ENCODE measurements at regions of chr6 and their contacts with region 1.

Region 1: DNA sequence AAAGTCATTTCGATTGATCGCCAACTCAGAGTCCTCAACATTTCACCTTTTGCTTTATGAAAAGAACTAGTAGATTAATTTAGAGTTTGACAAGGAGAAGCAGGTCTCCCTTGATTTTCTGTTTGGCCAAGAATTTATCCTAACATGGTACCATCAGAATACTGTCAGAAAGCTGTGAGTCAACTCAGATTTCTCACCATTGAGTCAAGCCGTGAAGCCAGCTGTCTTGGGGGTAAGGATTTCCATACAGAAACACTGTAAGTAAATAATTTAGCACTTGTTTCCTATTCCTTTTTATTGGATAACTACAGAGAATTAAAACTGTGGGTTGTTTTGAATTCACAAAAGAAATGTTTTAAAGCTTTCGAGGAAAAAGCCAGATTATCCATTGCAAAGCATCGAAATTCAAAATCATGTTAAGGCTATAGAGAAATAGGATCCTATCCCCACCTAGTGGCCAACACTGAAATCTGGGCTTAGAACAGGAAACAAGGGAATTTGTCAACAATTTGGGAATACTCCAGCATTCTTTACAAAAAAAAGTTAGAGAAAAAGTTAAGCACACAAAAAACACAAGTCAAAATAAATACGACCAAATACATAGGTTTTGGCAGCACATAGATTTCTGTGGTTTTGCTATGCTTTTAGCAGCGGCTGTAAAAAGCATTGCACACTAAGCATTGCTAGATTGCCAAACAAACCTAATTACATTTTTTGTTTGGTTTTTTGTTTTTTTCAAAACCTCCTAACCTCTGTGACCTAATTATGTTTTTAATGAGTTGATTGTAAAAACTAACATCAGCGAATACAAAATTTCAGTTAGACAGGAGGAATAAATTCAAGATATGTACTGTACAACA is 44.2 kb downstream of the COL11A2 start:
- DNase-seq: no peak
- ATAC-seq: no peak
- H3K4me3 ChIP-seq: no peak overlapping the region
- H3K27ac ChIP-seq: no peak overlapping the region
- H3K4me1 ChIP-seq: peaks cover 3% of the 10 kb centered on the region; the same call in 1 of the 2 replicates
- H3K27me3 ChIP-seq: peaks cover 0 to 2% of the 10 kb centered on the region in 2 experiments; a peak in 2 of 4 replicates
- CTCF ChIP-seq: peak; percentile 69 to 82 (median 81)
- EP300 ChIP-seq: no peak
- POLR2A ChIP-seq: no peak
- RAD21 ChIP-seq: peak; percentile 93

Region 2: DNA sequence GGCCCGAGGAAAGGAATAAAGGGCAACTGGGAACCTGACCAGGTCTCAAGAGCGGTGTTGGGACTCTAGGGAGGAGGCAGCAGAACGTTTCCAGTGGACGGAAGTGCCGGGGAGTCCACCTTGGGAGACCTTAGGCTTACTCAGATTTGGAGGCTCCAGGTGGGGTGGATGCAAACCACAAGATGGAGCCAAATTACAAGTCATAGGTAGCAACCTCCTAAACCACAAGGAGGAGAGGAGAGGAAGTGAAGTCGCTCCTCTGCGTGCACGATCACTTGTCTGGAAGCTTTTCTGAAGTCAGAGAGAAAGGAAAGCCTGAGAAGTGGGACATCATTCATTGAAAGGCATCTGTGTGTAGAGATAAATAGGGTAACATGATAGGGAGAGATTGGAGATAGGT is 148.0 kb before region 1 on chr6:
- CTCF ChIA-PET with region 1: interaction called, 21 read pairs
- POLR2A ChIA-PET with region 1: no interaction called
- RAD21 ChIA-PET with region 1: interaction called, 3 read pairs
- SMC1A ChIA-PET with region 1: interaction called, 13 read pairs
- in situ Hi-C with region 1: no loop called
- intact Hi-C with region 1: no loop called
- DNase-seq: no peak
- ATAC-seq: peak; percentile 89
- H3K4me3 ChIP-seq: no peak overlapping the region
- H3K27ac ChIP-seq: no peak overlapping the region
- H3K4me1 ChIP-seq: peaks cover 7% of the 10 kb centered on the region; the same call in 1 of the 2 replicates
- H3K27me3 ChIP-seq: no peaks in the 10 kb centered on the region
- CTCF ChIP-seq: peak; percentile 51 to 60 (median 53)
- EP300 ChIP-seq: no peak
- POLR2A ChIP-seq: no peak
- RAD21 ChIP-seq: peak; percentile 73

Region 3: GRCh38 chr6:33118525-33119123 is 29.4 kb before region 1 on chr6:
- CTCF ChIA-PET with region 1: interaction called, 266 read pairs
- POLR2A ChIA-PET with region 1: interaction called, 5 read pairs
- RAD21 ChIA-PET with region 1: interaction called, 19 read pairs
- SMC1A ChIA-PET with region 1: interaction called, 127 read pairs
- in situ Hi-C with region 1: no loop called
- intact Hi-C with region 1: loop called (anchors 2 kb)
- DNase-seq: no peak
- ATAC-seq: peak; percentile 45
- H3K4me3 ChIP-seq: no peak overlapping the region
- H3K27ac ChIP-seq: no peak overlapping the region
- H3K4me1 ChIP-seq: peaks cover 36% of the 10 kb centered on the region
- H3K27me3 ChIP-seq: peaks cover 0 to 2% of the 10 kb centered on the region in 2 experiments; a peak in 2 of 4 replicates
- CTCF ChIP-seq: peak; percentile 53 to 66 (median 61); a peak in 5 of 6 replicates
- EP300 ChIP-seq: no peak
- POLR2A ChIP-seq: no peak
- RAD21 ChIP-seq: peak; percentile 62

Region 4: GRCh38 chr6:33161354-33162331 is 13.6 kb after region 1 on chr6:
- CTCF ChIA-PET with region 1: interaction called, 80 read pairs
- POLR2A ChIA-PET with region 1: interaction called, 5 read pairs
- RAD21 ChIA-PET with region 1: interaction called, 4 read pairs
- SMC1A ChIA-PET with region 1: interaction called, 21 read pairs
- in situ Hi-C with region 1: no loop called
- intact Hi-C with region 1: no loop called
- DNase-seq: no peak
- ATAC-seq: peak; percentile 96
- H3K4me3 ChIP-seq: peak overlapping the region; percentile 70; the same call in 1 of the 2 replicates
- H3K27ac ChIP-seq: no peak overlapping the region
- H3K4me1 ChIP-seq: peaks cover 4% of the 10 kb centered on the region
- H3K27me3 ChIP-seq: no peaks in the 10 kb centered on the region
- CTCF ChIP-seq: peak; percentile 89 to 97 (median 96); a peak in 5 of 6 replicates
- EP300 ChIP-seq: no peak
- POLR2A ChIP-seq: no peak
- RAD21 ChIP-seq: peak; percentile 64

Region 5: DNA sequence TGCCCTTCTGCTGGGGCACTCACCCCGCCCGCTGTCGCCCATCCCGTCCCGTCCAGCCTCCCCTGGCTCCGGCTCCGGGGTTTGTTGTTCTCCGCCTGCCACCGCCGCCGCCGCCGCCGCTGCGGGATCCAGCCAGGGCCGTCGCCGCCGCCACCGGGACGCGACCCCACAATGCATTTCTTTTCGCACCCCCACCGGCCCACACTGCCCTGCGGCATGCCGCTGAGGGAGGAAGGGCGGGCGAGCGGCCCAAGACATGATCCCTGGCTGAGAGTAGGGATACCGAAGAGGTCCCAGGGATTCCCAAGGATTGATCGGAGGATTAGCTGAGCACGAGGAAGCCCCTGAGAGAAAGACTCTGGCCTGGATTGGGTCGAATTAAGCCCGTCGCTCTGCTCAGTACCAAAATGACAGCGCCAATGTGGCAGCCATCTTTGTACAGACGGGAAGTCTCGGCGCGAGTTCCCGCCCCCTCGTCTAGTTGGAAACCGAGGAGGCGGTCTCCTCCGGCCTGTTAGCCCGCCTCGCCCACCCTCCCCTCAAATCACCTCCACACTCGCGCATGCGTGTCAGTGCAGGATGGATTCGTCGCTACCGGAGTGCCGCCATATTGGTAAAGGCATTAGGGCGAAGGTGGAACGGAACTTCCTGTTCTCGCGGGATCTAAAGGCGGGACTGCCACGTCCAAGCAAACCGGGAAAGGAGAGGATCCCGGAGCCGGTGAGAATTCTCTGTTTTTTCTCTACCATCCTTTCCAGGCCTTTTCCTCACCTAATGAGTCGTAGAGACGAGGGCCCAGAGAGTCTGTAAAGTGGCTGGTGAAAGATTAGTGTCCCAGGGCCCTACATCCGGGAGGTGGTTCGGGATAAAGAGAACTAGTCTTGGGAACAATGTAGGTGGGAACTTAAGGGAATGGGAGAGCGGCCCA is 52.4 kb after region 1 on chr6 and contains the starts of genes RXRB and SLC39A7:
- CTCF ChIA-PET with region 1: interaction called, 22 read pairs
- POLR2A ChIA-PET with region 1: interaction called, 4 read pairs
- RAD21 ChIA-PET with region 1: no interaction called
- SMC1A ChIA-PET with region 1: interaction called, 5 read pairs
- in situ Hi-C with region 1: no loop called
- intact Hi-C with region 1: no loop called
- DNase-seq: peak; percentile 99
- ATAC-seq: peak; percentile 77
- H3K4me3 ChIP-seq: peak within 1 kb of the TSS; percentile 95
- H3K27ac ChIP-seq: peak within 1 kb of the TSS; percentile 99
- H3K4me1 ChIP-seq: peaks cover 33% of the 10 kb centered on the region
- H3K27me3 ChIP-seq: no peaks in the 10 kb centered on the region
- CTCF ChIP-seq: no peak
- EP300 ChIP-seq: peak in 1 of 2 experiments; percentile 12; a peak in 1 of 4 replicates
- POLR2A ChIP-seq: peak; percentile 95
- RAD21 ChIP-seq: no peak
- polyA plus RNA-seq, gene RXRB: 0.71 to 1.6 TPM
- polyA plus RNA-seq, gene SLC39A7: 7.3 to 8.4 TPM